Naive thymus-derived CD4-positive, alpha-beta T cell (primary cell): ENCODE measurements at regions of chr1 and their contacts with region 1.

Region 1: DNA sequence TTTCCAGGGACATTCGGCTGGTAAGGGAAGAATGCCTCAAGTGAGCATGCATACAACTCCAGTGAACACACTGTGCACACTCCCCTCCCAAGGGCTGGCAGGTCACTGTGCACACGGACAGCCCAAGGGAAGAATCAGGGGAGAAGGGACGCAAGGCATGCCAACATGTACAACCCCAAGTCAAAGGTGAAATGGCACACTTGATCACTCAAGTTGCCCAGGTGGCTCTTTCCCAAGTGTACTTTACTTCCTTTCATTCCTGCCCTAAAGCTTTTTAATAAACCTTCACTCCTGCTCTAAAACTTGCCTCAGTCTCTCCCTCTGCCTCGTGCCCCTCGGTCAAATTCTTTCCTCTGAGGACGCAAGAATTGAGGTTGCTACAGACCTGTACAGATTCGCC is 13.5 kb upstream of the SLC1A7 start:
- DNase-seq: no peak
- ATAC-seq: no peak
- H3K4me3 ChIP-seq: no peak overlapping the region
- H3K4me3 Mint-ChIP-seq: no peak overlapping the region
- H3K27ac ChIP-seq: no peak overlapping the region
- H3K27ac Mint-ChIP-seq: no peak overlapping the region
- H3K4me1 ChIP-seq: no peaks in the 10 kb centered on the region
- H3K4me1 Mint-ChIP-seq: peaks cover 0 to 1% (median 0%) of the 10 kb centered on the region in 7 donors
- H3K27me3 ChIP-seq: no peaks in the 10 kb centered on the region
- H3K27me3 Mint-ChIP-seq: peaks cover 0 to 8% (median 0%) of the 10 kb centered on the region in 5 donors

Region 2: DNA sequence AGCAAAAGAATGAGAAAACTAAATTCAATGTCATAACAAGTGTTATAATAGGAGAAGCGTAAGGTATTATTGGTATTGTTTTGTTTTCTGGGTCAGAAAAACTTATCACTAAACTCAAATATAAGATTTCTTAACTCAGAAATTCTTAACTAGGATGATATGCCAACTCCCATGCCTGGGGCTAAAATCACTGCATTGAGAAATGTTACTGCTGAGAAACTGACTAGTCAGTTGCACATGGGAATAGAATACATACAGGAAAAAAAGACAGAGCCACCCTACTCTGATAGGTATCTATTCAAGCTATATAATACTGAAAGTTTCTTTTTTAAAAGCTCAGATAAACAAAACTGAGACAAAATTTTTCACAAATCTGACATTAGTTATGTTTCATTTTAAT is 695.3 kb before region 1 on chr1:
- CTCF ChIA-PET with region 1: no interaction called
- POLR2A ChIA-PET with region 1: no interaction called
- intact Hi-C with region 1: no loop called
- DNase-seq: no peak
- ATAC-seq: no peak
- H3K4me3 ChIP-seq: no peak overlapping the region
- H3K4me3 Mint-ChIP-seq: no peak overlapping the region
- H3K27ac ChIP-seq: no peak overlapping the region
- H3K27ac Mint-ChIP-seq: peak overlapping the region in 1 of 9 donors; percentile 21
- H3K4me1 ChIP-seq: no peaks in the 10 kb centered on the region
- H3K4me1 Mint-ChIP-seq: peaks cover 0 to 4% (median 0%) of the 10 kb centered on the region in 7 donors
- H3K27me3 ChIP-seq: no peaks in the 10 kb centered on the region
- H3K27me3 Mint-ChIP-seq: no peaks in the 10 kb centered on the region

Region 3: GRCh38 chr1:53137729-53138128 is 18.2 kb before region 1 on chr1:
- CTCF ChIA-PET with region 1: no interaction called
- POLR2A ChIA-PET with region 1: no interaction called
- intact Hi-C with region 1: loop called in 1 of 2 experiments (anchors 1 kb)
- DNase-seq: no peak
- ATAC-seq: no peak
- H3K4me3 ChIP-seq: no peak overlapping the region
- H3K4me3 Mint-ChIP-seq: no peak overlapping the region
- H3K27ac ChIP-seq: no peak overlapping the region
- H3K27ac Mint-ChIP-seq: no peak overlapping the region
- H3K4me1 ChIP-seq: peaks cover 0 to 20% of the 10 kb centered on the region in 2 donors
- H3K4me1 Mint-ChIP-seq: no peaks in the 10 kb centered on the region
- H3K27me3 ChIP-seq: no peaks in the 10 kb centered on the region
- H3K27me3 Mint-ChIP-seq: peaks cover 0 to 2% (median 0%) of the 10 kb centered on the region in 5 donors